B cell (primary cell): ENCODE measurements at regions of chr19 and their contacts with region 1.

Region 1: GRCh38 chr19:53103198-53103944 is at the start of gene ZNF160:
- DNase-seq: peak; percentile 98
- ATAC-seq: peak; percentile 97
- H3K4me3 ChIP-seq: peak within 1 kb of the TSS; percentile 69 to 98 (median 93)
- H3K4me3 Mint-ChIP-seq: peak within 1 kb of the TSS; percentile 97
- H3K27ac ChIP-seq: peak within 1 kb of the TSS; percentile 83 to 93
- H3K27ac Mint-ChIP-seq: peak within 1 kb of the TSS; percentile 96
- H3K4me1 ChIP-seq: peaks cover 14 to 18% of the 10 kb centered on the region in 2 donors
- H3K4me1 Mint-ChIP-seq: peaks cover 34% of the 10 kb centered on the region
- H3K27me3 ChIP-seq: no peaks in the 10 kb centered on the region
- H3K27me3 Mint-ChIP-seq: no peaks in the 10 kb centered on the region
- CTCF ChIP-seq: no peak
- total RNA-seq, gene ZNF160: 87.8 and 97.5 TPM in 2 replicates

Region 2: DNA sequence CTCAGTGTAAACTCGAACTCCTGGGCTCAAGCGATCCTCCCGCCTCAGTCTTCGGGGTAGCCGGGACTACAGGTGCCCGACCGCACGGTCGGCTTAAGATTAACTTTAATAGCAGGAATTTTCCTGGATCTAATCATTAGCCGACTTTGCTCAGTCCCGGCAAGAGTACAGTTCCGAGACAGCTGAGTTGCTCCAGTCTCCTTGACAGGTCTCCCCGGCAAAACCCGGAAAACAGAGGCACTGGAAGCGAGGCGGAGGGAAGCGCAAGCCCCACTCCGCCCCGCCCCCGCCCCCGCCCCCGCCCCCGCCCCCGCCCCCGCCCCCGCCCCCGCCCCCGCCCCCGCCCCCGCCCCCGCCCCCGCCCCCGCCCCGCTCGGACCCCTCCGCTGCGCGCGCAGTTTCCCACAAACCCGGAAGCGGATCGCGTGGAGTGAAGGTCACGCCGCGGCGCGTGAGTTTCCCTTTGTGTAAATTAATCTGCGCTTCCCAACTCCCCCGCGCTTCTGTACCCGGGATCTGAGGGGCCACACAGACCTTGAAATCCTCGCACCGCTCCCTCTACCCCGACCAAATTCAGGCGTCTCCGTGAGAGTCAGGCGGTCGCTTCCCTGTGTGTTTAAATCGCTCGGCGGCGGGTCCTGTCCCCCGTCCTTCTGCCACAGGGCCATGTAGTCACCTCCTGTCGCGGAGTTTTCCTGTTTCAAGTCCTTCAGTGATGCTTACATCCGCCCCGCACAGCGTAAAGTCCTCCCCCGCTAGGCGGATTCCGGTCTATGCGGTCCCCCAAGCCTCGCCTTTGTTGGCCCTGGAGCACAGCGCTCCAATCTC is 806.4 kb before region 1 on chr19 and contains the start of gene ZNF480:
- CTCF ChIA-PET with region 1: no interaction called
- POLR2A ChIA-PET with region 1: no interaction called
- intact Hi-C with region 1: loop called (anchors 1 kb)
- DNase-seq: peak; percentile 91
- ATAC-seq: peak; percentile 77
- H3K4me3 ChIP-seq: peak within 1 kb of the TSS; percentile 93 to 98 (median 98)
- H3K4me3 Mint-ChIP-seq: peak within 1 kb of the TSS; percentile 96
- H3K27ac ChIP-seq: peak within 1 kb of the TSS; percentile 94 to 96
- H3K27ac Mint-ChIP-seq: peak within 1 kb of the TSS; percentile 98
- H3K4me1 ChIP-seq: peaks cover 11 to 16% of the 10 kb centered on the region in 2 donors
- H3K4me1 Mint-ChIP-seq: peaks cover 21% of the 10 kb centered on the region
- H3K27me3 ChIP-seq: no peaks in the 10 kb centered on the region
- H3K27me3 Mint-ChIP-seq: no peaks in the 10 kb centered on the region
- CTCF ChIP-seq: no peak
- total RNA-seq, gene ZNF480: 21.8 and 24.8 TPM in 2 replicates

Region 3: DNA sequence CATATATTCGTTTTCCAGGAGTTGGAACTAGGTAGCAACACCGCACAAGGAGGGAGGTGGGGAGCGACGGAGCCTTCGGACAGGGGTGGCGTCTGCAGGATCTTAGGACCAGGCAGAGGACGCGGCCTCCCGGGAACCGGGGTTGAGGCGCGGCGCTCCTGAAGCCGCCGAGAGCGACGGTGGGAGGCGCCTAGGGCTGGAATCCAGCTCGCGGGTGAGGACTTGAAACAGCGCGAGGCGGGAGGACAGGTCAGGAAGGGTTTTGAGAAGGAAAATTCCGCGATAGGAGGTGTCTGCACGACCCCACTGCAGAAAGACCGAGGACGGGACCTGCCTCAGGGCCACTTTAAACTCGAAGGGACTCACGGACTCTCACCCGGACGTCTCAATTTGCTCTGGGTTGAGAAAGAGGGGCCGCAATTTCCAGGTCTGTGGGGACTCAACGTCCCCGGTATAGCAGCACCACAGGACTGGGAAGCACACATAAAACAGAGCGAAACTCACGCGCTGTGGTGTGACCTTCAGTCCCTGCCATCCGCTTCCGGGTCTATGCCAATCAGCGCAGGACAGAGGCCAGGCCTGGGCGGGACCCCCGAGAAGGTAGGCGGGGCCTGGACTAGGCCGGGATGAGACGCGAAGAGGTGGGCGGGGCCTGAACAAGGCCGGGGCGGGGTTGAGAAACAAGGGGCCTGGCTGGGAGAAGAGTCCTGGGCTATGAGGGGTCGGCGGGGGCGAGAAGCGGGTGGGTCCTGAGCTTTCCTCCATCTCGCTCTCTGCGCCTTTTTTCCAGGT is 206.0 kb before region 1 on chr19 and contains the start of gene ZNF320:
- CTCF ChIA-PET with region 1: no interaction called
- POLR2A ChIA-PET with region 1: no interaction called
- intact Hi-C with region 1: loop called (anchors 1 kb)
- DNase-seq: peak; percentile 95
- ATAC-seq: peak; percentile 100
- H3K4me3 ChIP-seq: peak within 1 kb of the TSS; percentile 85 to 98 (median 98)
- H3K4me3 Mint-ChIP-seq: peak within 1 kb of the TSS; percentile 96
- H3K27ac ChIP-seq: peak within 1 kb of the TSS; percentile 66 to 83
- H3K27ac Mint-ChIP-seq: peak within 1 kb of the TSS; percentile 94
- H3K4me1 ChIP-seq: peaks cover 5 to 17% of the 10 kb centered on the region in 2 donors
- H3K4me1 Mint-ChIP-seq: peaks cover 20% of the 10 kb centered on the region
- H3K27me3 ChIP-seq: no peaks in the 10 kb centered on the region
- H3K27me3 Mint-ChIP-seq: no peaks in the 10 kb centered on the region
- CTCF ChIP-seq: no peak
- total RNA-seq, gene ZNF320: 33.1 and 36.0 TPM in 2 replicates

Region 4: DNA sequence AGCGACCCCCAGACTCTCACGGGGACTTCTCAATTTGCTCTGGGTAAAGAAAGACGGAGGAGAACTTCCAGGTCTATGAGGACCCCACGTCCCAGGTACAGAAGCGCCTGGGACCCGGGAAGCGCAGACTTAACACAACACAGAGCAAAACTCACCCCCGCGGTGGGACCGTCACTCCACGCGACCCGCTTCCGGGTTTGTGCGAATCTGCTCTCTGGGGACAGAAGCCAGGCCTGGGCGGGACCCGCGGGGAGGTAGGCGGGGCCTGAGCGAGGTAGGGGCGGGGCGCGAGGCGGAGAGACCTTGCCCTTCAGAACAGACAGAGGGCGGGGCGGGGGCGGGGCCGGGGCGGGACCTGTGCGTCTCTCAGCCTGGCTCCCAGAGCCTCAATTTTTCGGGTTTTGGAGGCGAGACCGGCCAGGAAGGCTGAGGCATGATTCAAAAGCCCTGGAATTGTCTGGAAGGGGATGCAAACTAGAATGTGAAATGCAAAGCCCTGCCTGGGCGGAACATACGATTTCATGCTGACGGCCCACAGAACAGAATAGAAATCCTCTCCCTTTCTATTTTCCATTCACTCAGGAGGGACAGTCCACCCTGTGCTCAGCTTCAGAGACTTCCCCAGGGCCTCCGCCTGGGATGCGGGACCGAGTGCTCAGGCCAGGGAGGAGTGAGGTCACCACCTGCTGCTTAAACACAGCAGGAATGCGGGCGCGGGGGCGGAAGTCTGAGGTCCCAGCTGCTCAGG is 160.8 kb before region 1 on chr19:
- CTCF ChIA-PET with region 1: no interaction called
- POLR2A ChIA-PET with region 1: no interaction called
- intact Hi-C with region 1: loop called (anchors 1 kb)
- DNase-seq: peak; percentile 96
- ATAC-seq: peak; percentile 100
- H3K4me3 ChIP-seq: peak overlapping the region; percentile 64 to 97 (median 88)
- H3K4me3 Mint-ChIP-seq: peak overlapping the region; percentile 92
- H3K27ac ChIP-seq: peak overlapping the region; percentile 72 to 90
- H3K27ac Mint-ChIP-seq: peak overlapping the region; percentile 86
- H3K4me1 ChIP-seq: peaks cover 6 to 20% of the 10 kb centered on the region in 2 donors
- H3K4me1 Mint-ChIP-seq: peaks cover 30% of the 10 kb centered on the region
- H3K27me3 ChIP-seq: no peaks in the 10 kb centered on the region
- H3K27me3 Mint-ChIP-seq: no peaks in the 10 kb centered on the region
- CTCF ChIP-seq: no peak

Region 5: GRCh38 chr19:53086949-53087348 is 16.4 kb before region 1 on chr19:
- CTCF ChIA-PET with region 1: no interaction called
- POLR2A ChIA-PET with region 1: no interaction called
- intact Hi-C with region 1: no loop called
- DNase-seq: no peak
- ATAC-seq: no peak
- H3K4me3 ChIP-seq: no peak overlapping the region
- H3K4me3 Mint-ChIP-seq: no peak overlapping the region
- H3K27ac ChIP-seq: no peak overlapping the region
- H3K27ac Mint-ChIP-seq: no peak overlapping the region
- H3K4me1 ChIP-seq: no peaks in the 10 kb centered on the region
- H3K4me1 Mint-ChIP-seq: no peaks in the 10 kb centered on the region
- H3K27me3 ChIP-seq: no peaks in the 10 kb centered on the region
- H3K27me3 Mint-ChIP-seq: no peaks in the 10 kb centered on the region
- CTCF ChIP-seq: no peak

Region 6: GRCh38 chr19:53132141-53132991 is 29.0 kb after region 1 on chr19 and contains the start of gene ZNF415:
- CTCF ChIA-PET with region 1: no interaction called
- POLR2A ChIA-PET with region 1: no interaction called
- intact Hi-C with region 1: loop called (anchors 2 kb)
- DNase-seq: peak; percentile 83
- ATAC-seq: peak; percentile 87
- H3K4me3 ChIP-seq: peak within 1 kb of the TSS; percentile 53 to 89 (median 75)
- H3K4me3 Mint-ChIP-seq: peak within 1 kb of the TSS; percentile 94
- H3K27ac ChIP-seq: peak within 1 kb of the TSS; percentile 16 to 69
- H3K27ac Mint-ChIP-seq: peak within 1 kb of the TSS; percentile 74
- H3K4me1 ChIP-seq: peaks cover 10 to 11% of the 10 kb centered on the region in 2 donors
- H3K4me1 Mint-ChIP-seq: peaks cover 17% of the 10 kb centered on the region
- H3K27me3 ChIP-seq: peaks cover 0 to 5% (median 0%) of the 10 kb centered on the region in 4 experiments
- H3K27me3 Mint-ChIP-seq: no peaks in the 10 kb centered on the region
- CTCF ChIP-seq: no peak
- total RNA-seq, gene ZNF415: 6.7 and 8.2 TPM in 2 replicates

Region 7: DNA sequence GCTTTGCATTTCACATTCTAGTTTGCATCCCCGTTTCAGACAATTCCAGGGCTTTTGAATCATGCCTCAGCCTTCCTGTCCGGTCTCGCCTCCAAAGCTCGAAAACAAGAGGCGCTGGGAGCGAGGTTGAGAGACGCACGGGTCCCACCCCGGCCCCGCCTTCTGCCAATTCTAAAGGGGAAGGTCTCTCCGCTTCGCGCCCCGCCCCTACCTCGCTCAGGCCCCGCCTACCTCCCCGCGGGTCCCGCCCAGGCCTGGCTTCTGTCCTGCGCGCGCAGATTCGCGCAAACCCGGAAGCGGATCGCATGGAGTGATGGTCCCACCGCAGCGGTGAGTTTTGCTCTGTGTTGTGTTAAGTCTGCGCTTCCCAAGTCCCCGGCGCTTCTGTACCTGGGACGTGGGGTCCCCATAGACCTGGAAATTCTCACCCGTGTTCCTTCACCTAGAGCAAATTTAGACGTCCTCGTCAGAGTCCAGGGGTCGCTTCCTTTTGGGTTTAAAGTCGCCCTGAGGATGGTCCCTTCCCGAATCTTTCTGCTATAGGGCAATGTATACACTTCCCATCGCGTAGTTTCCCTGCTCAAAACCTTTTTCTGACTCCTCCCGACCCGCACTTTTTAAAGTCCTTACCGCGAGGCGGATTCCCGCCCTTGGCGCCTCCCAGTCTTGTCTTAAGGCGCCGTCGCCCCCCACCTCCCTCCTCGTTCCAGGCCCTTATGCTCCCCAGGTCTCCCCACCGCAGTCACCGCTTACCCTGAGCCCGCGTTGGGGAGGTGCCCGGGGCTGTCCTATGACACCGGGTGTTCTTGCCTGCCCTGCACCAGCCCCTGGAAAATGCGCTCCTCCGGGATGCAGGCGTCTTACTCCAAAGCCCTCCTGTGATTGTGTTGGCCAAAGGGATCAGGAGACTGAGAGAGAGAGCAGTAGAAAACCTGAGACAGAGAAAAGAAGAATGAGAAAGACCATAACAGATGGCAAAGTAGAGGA is 230.4 kb after region 1 on chr19 and contains the start of gene ZNF845:
- CTCF ChIA-PET with region 1: no interaction called
- POLR2A ChIA-PET with region 1: no interaction called
- intact Hi-C with region 1: loop called (anchors 1 kb)
- DNase-seq: peak; percentile 95
- ATAC-seq: peak; percentile 100
- H3K4me3 ChIP-seq: peak within 1 kb of the TSS; percentile 94 to 99 (median 96)
- H3K4me3 Mint-ChIP-seq: peak within 1 kb of the TSS; percentile 96
- H3K27ac ChIP-seq: peak within 1 kb of the TSS; percentile 60 to 81
- H3K27ac Mint-ChIP-seq: peak within 1 kb of the TSS; percentile 95
- H3K4me1 ChIP-seq: peaks cover 10 to 21% of the 10 kb centered on the region in 2 donors
- H3K4me1 Mint-ChIP-seq: peaks cover 22% of the 10 kb centered on the region
- H3K27me3 ChIP-seq: peaks cover 0 to 3% (median 0%) of the 10 kb centered on the region in 4 experiments
- H3K27me3 Mint-ChIP-seq: peaks cover 11% of the 10 kb centered on the region
- CTCF ChIP-seq: no peak
- total RNA-seq, gene ZNF845: 16.9 and 17.4 TPM in 2 replicates

Region 8: GRCh38 chr19:53431399-53432087 is 328.2 kb after region 1 on chr19 and contains the start of gene ZNF761:
- CTCF ChIA-PET with region 1: no interaction called
- POLR2A ChIA-PET with region 1: no interaction called
- intact Hi-C with region 1: loop called (anchors 1 kb)
- DNase-seq: peak; percentile 97
- ATAC-seq: peak; percentile 98
- H3K4me3 ChIP-seq: peak within 1 kb of the TSS; percentile 60 to 83 (median 79)
- H3K4me3 Mint-ChIP-seq: peak within 1 kb of the TSS; percentile 95
- H3K27ac ChIP-seq: peak within 1 kb of the TSS; percentile 61 to 82
- H3K27ac Mint-ChIP-seq: peak within 1 kb of the TSS; percentile 89
- H3K4me1 ChIP-seq: peaks cover 10 to 13% of the 10 kb centered on the region in 2 donors
- H3K4me1 Mint-ChIP-seq: peaks cover 34% of the 10 kb centered on the region
- H3K27me3 ChIP-seq: no peaks in the 10 kb centered on the region
- H3K27me3 Mint-ChIP-seq: no peaks in the 10 kb centered on the region
- CTCF ChIP-seq: peak; percentile 39
- total RNA-seq, gene ZNF761: 14.9 and 18.9 TPM in 2 replicates